HEK293 (cell line): ENCODE measurements at regions of chr5 and their contacts with region 1.

Region 1: GRCh38 chr5:138213161-138214029 is at the start of gene CDC23:
- H3K4me3 ChIP-seq: peak within 1 kb of the TSS; percentile 94
- H3K27ac ChIP-seq: peak within 1 kb of the TSS; percentile 77
- H3K4me1 ChIP-seq: peaks cover 7% of the 10 kb centered on the region; the same call in 1 of the 2 replicates
- CTCF ChIP-seq: no peak; the same call in 1 of the 2 replicates

Region 2: GRCh38 chr5:137888857-137889759 is 324.3 kb before region 1 on chr5 and contains the start of gene PKD2L2:
- CTCF ChIA-PET with region 1: no interaction called
- POLR2A ChIA-PET with region 1: no interaction called
- H3K4me3 ChIP-seq: peak within 1 kb of the TSS; percentile 56
- H3K27ac ChIP-seq: peak within 1 kb of the TSS; percentile 59
- H3K4me1 ChIP-seq: peaks cover 11% of the 10 kb centered on the region
- CTCF ChIP-seq: peak; percentile 46; the same call in 1 of the 2 replicates

Region 3: GRCh38 chr5:138230981-138231589 is 17.7 kb after region 1 on chr5:
- CTCF ChIA-PET with region 1: no interaction called
- POLR2A ChIA-PET with region 1: interaction called, 11 read pairs
- H3K4me3 ChIP-seq: no peak overlapping the region
- H3K27ac ChIP-seq: no peak overlapping the region
- H3K4me1 ChIP-seq: peaks cover 18% of the 10 kb centered on the region
- CTCF ChIP-seq: no peak

Region 4: DNA sequence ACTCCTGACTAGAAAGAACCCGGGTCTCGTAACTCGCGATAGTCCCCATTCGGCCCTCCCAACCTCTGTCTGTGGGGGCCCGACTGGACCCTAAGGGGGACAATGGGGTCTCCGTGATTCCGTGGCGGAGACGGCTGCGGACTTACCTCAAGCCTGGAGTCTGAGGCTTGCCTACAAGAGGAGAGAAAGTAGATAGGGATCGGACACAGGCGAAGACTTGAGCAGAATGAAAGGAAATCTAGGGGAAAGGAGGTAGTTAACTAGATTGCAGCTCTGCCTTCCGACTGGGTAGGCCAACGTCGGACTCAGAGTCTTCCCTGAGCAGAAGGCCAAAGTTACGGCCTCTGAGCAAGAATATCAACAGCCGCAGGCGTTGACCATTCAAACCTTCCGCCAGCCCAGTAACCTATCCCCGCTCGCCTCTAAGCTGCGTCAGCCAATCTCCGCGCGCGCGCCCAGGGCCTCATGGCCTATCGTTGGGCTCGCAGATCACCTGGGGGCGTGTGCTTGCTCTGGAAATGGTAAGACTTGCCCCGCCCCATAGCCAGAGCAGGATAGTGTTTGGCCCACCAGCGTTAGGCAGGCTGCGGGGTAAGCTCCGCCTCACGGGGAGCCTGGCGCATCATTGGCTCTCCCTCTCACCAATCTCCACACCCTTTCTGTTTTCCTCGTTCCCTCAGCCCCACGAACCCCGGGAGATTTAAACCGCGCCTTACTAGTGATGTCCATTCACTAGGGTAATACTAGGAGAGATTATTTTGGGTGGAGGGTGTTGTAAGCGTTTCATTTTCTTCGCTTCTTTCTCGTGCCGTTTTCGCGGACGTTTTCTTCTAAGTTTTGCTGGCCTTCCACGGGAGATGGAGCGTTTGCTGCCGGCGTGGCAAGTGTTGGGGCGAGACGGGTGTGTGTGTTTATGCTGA is 118.3 kb after region 1 on chr5 and contains the start of gene CDC25C:
- CTCF ChIA-PET with region 1: interaction called, 3 read pairs
- POLR2A ChIA-PET with region 1: interaction called, 27 read pairs
- H3K4me3 ChIP-seq: peak within 1 kb of the TSS; percentile 78
- H3K27ac ChIP-seq: peak within 1 kb of the TSS; percentile 75
- H3K4me1 ChIP-seq: peaks cover 4% of the 10 kb centered on the region; the same call in 1 of the 2 replicates
- CTCF ChIP-seq: no peak

Region 5: DNA sequence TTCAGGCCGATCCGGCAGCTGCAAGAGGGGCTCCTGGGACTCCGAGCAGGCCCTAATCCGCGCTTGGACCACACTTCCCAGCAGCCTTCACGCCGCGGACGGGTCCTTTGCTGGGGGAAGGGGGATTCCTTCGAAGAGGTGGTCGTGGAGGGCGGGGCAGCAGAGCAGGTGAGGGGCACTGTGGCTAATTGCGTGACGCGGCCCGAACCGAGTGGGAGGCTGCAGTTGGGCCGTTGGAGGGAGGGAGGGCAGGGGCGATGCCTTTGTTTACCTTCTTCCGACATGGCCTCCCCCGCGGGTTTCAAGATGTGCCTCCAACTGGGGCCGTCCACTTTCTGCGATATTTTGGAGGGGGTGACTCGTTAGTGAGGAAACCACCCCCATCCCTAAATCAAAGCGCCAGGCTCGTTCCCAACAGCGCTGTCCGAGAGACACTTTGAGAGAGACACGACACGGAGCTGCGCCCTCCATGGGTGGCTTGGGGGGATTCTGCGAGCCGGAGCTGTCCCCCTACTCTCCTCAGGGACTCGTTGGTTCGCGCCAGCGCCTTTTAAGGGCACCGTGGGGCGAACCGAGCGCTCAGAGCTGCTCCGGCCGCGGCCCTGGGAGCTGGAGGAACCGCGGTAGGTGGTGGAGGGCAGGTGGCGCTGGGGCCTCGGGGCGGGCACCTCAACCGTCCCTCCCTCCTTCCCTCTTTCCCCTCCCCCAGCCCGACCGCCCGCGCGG is 124.5 kb after region 1 on chr5 and contains the start of gene FAM53C:
- CTCF ChIA-PET with region 1: no interaction called
- POLR2A ChIA-PET with region 1: interaction called, 27 read pairs
- H3K4me3 ChIP-seq: peak within 1 kb of the TSS; percentile 83
- H3K27ac ChIP-seq: peak within 1 kb of the TSS; percentile 98
- H3K4me1 ChIP-seq: peaks cover 8% of the 10 kb centered on the region
- CTCF ChIP-seq: peak; percentile 58; the same call in 1 of the 2 replicates